ENCODE measurements at regions of chr7 and their contacts with region 1.

Region 1: DNA sequence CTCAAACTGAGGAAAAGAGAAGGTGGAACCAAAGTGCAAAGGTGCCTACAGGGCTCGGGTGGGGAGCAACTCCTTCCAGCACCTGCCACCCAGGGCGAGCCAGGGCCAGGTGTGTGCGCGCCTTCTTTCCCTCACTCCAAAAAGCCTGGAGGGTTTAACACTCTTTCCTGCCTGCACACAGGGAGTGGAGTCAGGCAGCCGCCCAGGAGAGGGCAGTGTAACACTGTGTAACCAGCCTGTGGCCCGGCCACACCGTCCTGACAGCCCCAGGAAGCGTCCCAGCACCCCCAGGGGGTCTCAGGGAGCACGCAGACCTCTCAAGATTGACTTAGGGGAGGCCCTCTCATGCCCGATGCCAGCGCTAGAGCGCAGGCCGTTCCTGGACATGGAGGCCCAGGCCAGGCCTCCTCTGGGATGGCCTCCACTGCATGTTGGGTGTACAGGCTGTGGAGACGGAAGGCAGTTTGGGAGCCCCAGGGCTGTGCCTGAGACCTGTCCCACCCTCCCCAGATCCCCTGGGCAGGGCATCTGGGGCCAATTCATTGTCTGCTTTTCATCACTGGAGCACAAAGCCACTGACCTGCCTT is 13.4 kb downstream of the BRI3 start:
- DNase-seq: peak; percentile 76 to 88 (median 79)
- ATAC-seq: peak; percentile 85
- H3K4me3 ChIP-seq: no peak overlapping the region
- H3K27ac ChIP-seq: peak overlapping the region in 3 of 4 donors; percentile 4 to 52 (median 27)
- H3K4me1 ChIP-seq: peaks cover 19% of the 10 kb centered on the region
- H3K27me3 ChIP-seq: no peaks in the 10 kb centered on the region
- CTCF ChIP-seq: peak; percentile 50 to 90 (median 71)
- POLR2A ChIP-seq: no peak

Region 2: DNA sequence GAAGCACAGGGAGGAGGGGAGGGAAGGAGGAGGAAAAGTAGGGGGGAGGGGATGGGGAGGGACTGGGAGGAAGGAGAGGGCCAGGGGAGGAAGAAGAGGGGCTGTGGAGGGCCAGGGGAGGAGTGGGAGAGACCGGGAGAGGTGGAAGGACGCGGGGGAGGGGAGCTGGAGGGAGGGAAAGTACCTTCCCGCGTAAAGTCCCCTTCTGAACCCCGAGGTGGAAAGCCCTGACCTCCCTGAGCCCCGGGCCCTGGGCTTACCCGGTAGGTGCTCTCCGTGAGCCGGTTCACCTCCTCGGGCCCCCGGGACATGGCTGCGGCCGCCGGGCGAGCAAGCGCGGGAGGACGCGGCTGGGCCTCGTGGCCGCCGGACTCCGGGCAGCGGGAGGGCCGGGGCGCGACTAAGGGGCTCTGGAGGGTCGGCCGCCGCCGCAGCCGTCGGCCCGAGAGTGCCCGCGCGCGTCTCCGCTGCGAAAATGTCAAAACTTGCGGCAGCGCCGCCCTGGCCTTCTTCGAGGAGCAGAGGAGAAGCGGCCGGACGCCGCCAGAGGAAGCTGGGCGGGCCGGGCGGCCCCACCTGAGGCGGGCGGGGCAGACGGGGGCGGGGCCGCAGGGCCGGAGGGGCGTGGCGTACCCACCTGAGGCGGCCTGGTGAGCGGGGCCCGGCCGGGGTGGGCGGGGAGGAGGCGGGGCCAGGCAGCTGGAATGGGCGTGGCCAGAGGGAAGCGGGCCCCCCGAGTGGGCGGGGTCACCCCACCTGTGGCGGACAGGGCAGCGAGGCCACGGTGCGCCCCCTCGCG is 105.9 kb after region 1 on chr7 and contains the start of gene BAIAP2L1:
- intact Hi-C with region 1: loop called (anchors 5 kb)
- DNase-seq: peak; percentile 96 to 99 (median 98)
- ATAC-seq: peak; percentile 96
- H3K4me3 ChIP-seq: peak within 1 kb of the TSS; percentile 61 to 80
- H3K27ac ChIP-seq: peak within 1 kb of the TSS; percentile 70 to 98 (median 93)
- H3K4me1 ChIP-seq: peaks cover 15% of the 10 kb centered on the region
- H3K27me3 ChIP-seq: no peaks in the 10 kb centered on the region
- CTCF ChIP-seq: peak in 2 of 7 experiments; percentile 89 to 91
- POLR2A ChIP-seq: peak; percentile 51 to 85 (median 71)
- total RNA-seq, gene BAIAP2L1: 15.8 to 23.1 TPM

Region 3: DNA sequence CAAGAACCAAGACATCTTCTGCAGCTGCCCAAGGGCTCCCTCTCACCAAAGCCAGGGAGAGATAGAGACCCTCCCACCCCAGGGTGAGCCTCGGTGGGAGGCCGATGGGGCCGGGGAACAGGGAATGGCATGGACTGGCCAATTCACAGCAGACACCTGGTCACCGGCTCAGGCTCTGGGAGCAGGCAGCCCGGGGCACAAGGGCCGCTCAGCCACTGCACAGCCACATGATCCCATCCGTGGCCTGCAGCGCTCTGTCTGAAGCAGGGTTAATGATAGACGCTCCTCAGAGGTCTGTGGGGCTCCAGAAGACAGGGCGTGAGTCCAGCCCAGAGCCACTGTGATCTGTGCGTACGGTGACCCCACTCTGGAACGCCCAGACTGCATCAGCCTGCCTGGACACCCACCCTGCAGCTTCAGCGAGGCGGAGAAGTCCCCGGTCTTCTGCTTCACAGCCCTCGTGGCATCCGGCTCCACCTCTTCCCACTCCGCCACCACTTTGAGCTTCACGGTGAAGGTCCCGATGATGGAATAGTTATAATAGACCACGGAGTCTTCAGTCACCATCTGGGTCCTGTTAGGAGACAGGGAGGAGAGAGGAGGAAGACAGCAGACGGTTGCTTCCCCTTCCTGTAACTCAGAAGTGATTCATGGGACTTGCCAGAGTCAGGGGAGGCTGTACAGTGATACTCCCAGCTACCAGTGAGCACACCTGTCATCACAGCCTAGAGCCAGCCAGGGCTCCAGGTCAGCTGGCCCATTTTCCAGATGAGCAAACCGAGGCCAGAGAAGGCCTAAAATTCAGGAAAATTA is 560.9 kb after region 1 on chr7:
- intact Hi-C with region 1: loop called (anchors 10 kb)
- DNase-seq: no peak
- ATAC-seq: no peak
- H3K4me3 ChIP-seq: no peak overlapping the region
- H3K27ac ChIP-seq: no peak overlapping the region
- H3K4me1 ChIP-seq: no peaks in the 10 kb centered on the region
- H3K27me3 ChIP-seq: no peaks in the 10 kb centered on the region
- CTCF ChIP-seq: no peak
- POLR2A ChIP-seq: no peak

Measured in body of pancreas (tissue), 4 donors.